ENCODE measurements at regions of chr3 and their contacts with region 1.

Region 1: GRCh38 chr3:122679085-122679881 is 1.4 kb upstream of the PARP14 start:
- DNase-seq: peak; percentile 64
- ATAC-seq: peak; percentile 79
- H3K4me3 ChIP-seq: peak overlapping the region; percentile 90 to 97 (median 93)
- H3K27ac ChIP-seq: no peak overlapping the region
- H3K4me1 ChIP-seq: peaks cover 29% of the 10 kb centered on the region
- H3K27me3 ChIP-seq: no peaks in the 10 kb centered on the region; a peak in 1 of 5 replicates
- CTCF ChIP-seq: peak; percentile 88
- EP300 ChIP-seq: no peak
- POLR2A ChIP-seq: no peak
- RAD21 ChIP-seq: peak; percentile 83

Region 2: GRCh38 chr3:122299872-122300460 is 379.3 kb before region 1 on chr3:
- CTCF ChIA-PET with region 1: no interaction called
- POLR2A ChIA-PET with region 1: no interaction called
- in situ Hi-C with region 1: no loop called
- intact Hi-C with region 1: loop called (anchors 10 kb)
- DNase-seq: peak; percentile 33
- ATAC-seq: peak; percentile 31; the same call in 1 of the 3 replicates
- H3K4me3 ChIP-seq: no peak overlapping the region
- H3K27ac ChIP-seq: no peak overlapping the region
- H3K4me1 ChIP-seq: peaks cover 6% of the 10 kb centered on the region
- H3K27me3 ChIP-seq: no peaks in the 10 kb centered on the region
- CTCF ChIP-seq: peak; percentile 60
- EP300 ChIP-seq: no peak
- POLR2A ChIP-seq: no peak
- RAD21 ChIP-seq: no peak; the same call in 1 of the 2 replicates

Region 3: DNA sequence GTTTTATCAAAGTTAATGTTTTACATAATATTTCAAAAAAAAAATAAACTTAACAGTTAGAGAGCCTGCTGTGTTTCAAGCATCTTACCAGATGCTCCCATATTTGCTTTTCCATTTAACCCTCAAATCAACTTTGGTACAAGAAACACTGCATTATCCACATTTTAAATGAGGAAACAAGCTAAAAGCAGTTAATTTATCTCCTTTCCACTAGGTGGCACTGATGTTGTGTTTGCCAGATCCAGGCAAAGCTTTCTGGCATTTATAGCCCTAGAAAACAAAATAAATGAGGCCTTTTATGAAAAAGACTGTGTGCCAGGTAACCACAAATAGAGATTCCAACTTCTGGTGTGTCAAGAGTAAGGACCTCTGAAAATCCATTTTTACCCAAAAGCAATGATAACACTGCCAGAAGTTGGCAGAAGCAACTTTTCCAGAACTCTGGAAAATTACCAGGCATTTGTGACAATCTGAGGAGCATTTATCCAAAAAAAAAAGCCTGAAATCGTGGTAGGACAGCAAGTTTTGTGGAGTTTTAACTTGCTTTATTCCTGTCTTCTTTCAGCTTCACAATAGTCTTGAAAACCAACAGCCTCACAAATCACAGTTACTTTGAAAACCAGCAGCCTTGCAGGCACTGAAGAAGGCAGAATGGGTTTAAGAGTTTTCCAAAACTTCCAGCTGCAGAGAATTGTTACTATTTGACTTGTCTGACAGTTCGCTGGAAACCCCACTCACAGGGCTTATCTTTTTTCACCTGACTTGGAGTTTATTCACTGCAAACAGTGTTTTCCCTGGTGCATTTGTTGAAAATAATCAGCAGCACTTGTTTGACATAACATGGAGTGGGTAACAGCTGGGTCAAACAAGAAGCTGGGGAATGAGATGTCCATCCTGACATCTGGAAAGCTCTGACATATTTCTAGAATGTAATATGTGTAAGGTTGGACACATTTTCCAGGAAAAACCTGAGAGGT is 286.1 kb before region 1 on chr3:
- CTCF ChIA-PET with region 1: interaction called, 14 read pairs
- POLR2A ChIA-PET with region 1: interaction called, 10 read pairs
- in situ Hi-C with region 1: loop called (anchors 5 kb)
- intact Hi-C with region 1: loop called (anchors 1 kb)
- DNase-seq: peak; percentile 47
- ATAC-seq: no peak
- H3K4me3 ChIP-seq: no peak overlapping the region
- H3K27ac ChIP-seq: peak overlapping the region; percentile 72
- H3K4me1 ChIP-seq: peaks cover 63% of the 10 kb centered on the region
- H3K27me3 ChIP-seq: no peaks in the 10 kb centered on the region
- CTCF ChIP-seq: peak; percentile 71
- EP300 ChIP-seq: no peak
- POLR2A ChIP-seq: no peak
- RAD21 ChIP-seq: peak; percentile 42; the same call in 1 of the 2 replicates

Region 4: DNA sequence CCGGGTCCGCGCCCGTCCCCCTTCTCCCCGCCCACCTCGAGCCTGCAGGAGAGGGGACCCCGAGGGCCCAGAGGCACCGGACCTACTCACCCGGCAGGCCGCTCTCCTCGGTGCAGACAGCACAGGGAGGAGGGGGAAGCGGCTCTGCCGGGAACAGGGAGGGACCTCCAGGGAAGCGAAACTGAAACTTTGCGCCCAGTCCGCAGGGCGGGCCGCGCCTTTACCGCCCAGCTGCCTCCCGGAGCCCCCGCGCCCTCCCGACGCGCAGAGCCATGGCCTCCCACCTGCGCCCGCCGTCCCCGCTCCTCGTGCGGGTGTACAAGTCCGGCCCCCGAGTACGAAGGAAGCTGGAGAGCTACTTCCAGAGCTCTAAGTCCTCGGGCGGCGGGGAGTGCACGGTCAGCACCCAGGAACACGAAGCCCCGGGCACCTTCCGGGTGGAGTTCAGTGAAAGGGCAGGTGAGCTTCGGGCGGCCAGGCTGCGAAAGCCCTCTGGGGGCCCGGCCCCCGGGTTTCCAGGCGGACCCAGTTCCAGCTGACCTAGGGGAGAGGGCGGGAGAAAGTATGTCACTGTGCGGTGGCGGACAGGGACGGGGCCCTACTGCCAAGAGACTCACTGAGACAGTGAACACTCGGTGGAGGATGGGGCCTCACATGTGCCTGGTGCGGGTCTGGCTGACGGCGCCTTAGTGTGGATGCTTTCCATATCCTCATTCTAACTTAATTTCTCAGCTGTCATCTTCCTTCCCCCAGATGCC is 114.9 kb before region 1 on chr3 and contains the starts of genes DTX3L and PARP9:
- CTCF ChIA-PET with region 1: interaction called, 39 read pairs
- POLR2A ChIA-PET with region 1: interaction called, 9 read pairs
- in situ Hi-C with region 1: loop called (anchors 5 kb)
- intact Hi-C with region 1: loop called (anchors 1 kb)
- DNase-seq: peak; percentile 64
- ATAC-seq: peak; percentile 99
- H3K4me3 ChIP-seq: peak within 1 kb of the TSS; percentile 78 to 82 (median 81)
- H3K27ac ChIP-seq: peak within 1 kb of the TSS; percentile 78
- H3K4me1 ChIP-seq: peaks cover 16% of the 10 kb centered on the region
- H3K27me3 ChIP-seq: no peaks in the 10 kb centered on the region
- CTCF ChIP-seq: peak; percentile 19; the same call in 1 of the 2 replicates
- EP300 ChIP-seq: no peak
- POLR2A ChIP-seq: peak; percentile 54 to 70; a peak in 3 of 4 replicates
- RAD21 ChIP-seq: peak; percentile 31; the same call in 1 of the 2 replicates
- total RNA-seq, gene DTX3L: 10.9 and 19.2 TPM in 2 replicates
- total RNA-seq, gene PARP9: 10.6 and 12.5 TPM in 2 replicates

Region 5: GRCh38 chr3:122691195-122691594 is 11.9 kb after region 1 on chr3:
- CTCF ChIA-PET with region 1: no interaction called
- POLR2A ChIA-PET with region 1: interaction called, 6 read pairs
- in situ Hi-C with region 1: no loop called
- intact Hi-C with region 1: loop called (anchors 1 kb)
- DNase-seq: peak; percentile 80
- ATAC-seq: peak; percentile 93
- H3K4me3 ChIP-seq: no peak overlapping the region
- H3K27ac ChIP-seq: peak overlapping the region; percentile 37
- H3K4me1 ChIP-seq: peaks cover 49% of the 10 kb centered on the region
- H3K27me3 ChIP-seq: no peaks in the 10 kb centered on the region
- CTCF ChIP-seq: no peak
- EP300 ChIP-seq: no peak
- POLR2A ChIP-seq: no peak
- RAD21 ChIP-seq: no peak

Region 6: DNA sequence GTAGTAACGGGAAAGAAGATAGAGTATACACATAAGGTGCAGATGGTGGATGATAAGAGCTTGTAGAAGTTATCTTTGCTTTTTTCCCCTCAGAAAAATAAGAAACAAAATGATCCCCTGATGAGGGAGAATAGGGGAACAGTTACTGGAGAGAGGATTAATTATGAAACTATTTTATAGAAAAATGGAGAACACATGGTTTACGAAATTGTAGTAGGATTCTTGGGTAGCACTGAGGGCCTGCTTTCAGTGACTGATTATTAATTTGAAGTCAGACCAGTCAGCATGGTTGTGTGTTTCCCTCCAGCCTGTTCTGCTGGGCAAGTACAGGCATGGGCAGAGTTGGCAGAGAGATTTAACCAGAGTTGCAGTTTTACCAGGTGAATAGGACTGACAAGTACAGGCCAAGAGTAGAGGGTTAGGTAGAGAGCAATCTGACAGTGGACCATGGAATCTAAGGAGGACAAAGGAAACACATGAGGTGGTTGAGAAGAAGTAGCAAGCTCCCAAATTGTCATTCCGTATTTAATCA is 121.5 kb after region 1 on chr3:
- CTCF ChIA-PET with region 1: no interaction called
- POLR2A ChIA-PET with region 1: no interaction called
- in situ Hi-C with region 1: no loop called
- intact Hi-C with region 1: no loop called
- DNase-seq: no peak
- ATAC-seq: no peak
- H3K4me3 ChIP-seq: no peak overlapping the region
- H3K27ac ChIP-seq: no peak overlapping the region
- H3K4me1 ChIP-seq: peaks cover 28% of the 10 kb centered on the region
- H3K27me3 ChIP-seq: no peaks in the 10 kb centered on the region
- CTCF ChIP-seq: no peak
- EP300 ChIP-seq: no peak
- POLR2A ChIP-seq: no peak
- RAD21 ChIP-seq: no peak

Measured in HepG2 (cell line).